Panc1 (cell line): ENCODE measurements at regions of chr2 and their contacts with region 1.

Region 1: GRCh38 chr2:119759451-119760236 is at the start of gene PTPN4:
- DNase-seq: peak; percentile 76
- ATAC-seq: peak; percentile 97
- H3K4me3 ChIP-seq: peak within 1 kb of the TSS; percentile 72 to 92
- H3K27ac ChIP-seq: peak within 1 kb of the TSS; percentile 96
- H3K4me1 ChIP-seq: peaks cover 22% of the 10 kb centered on the region
- H3K27me3 ChIP-seq: no peaks in the 10 kb centered on the region
- CTCF ChIP-seq: no peak
- total RNA-seq, gene PTPN4: 45.9 TPM

Region 2: DNA sequence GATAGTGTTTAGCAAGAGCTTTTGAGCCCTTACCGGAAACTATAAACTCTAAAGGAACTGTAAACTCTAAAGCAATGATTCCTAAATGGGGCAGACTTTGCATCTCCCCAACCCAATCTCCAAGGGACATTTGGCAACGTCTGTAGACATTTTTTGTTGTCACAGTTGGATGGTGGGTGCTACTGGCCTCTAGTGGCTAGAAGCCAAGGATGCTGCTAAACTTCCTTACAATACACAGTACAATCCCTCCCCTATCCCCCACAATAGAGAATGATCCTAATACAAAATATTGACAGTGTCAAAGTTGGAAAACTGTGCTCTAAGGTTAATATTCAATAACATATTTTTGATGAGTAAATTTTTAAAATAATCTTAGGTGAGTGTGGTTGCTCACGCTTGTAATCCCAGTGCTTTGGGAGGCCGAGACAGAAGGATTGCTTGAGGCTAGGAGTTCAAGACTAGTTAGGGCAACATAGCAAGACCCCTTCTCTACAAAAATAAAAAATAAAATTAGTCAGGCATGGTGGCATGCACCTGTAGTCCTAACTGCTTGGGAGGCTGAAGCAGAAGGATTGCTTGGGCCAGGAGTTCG is 66.8 kb after region 1 on chr2:
- CTCF ChIA-PET with region 1: interaction called, 3 read pairs
- POLR2A ChIA-PET with region 1: no interaction called
- in situ Hi-C with region 1: no loop called
- intact Hi-C with region 1: loop called (anchors 5 kb)
- DNase-seq: no peak
- ATAC-seq: peak; percentile 89
- H3K4me3 ChIP-seq: no peak overlapping the region
- H3K27ac ChIP-seq: no peak overlapping the region
- H3K4me1 ChIP-seq: peaks cover 3% of the 10 kb centered on the region; the same call in 1 of the 2 replicates
- H3K27me3 ChIP-seq: no peaks in the 10 kb centered on the region
- CTCF ChIP-seq: peak; percentile 79